ENCODE measurements at regions of chr10 and their contacts with region 1.

Region 1: GRCh38 chr10:63866075-63866746 is 345.0 kb downstream of the REEP3 start:
- DNase-seq: peak; percentile 87
- ATAC-seq: peak; percentile 96
- H3K4me3 Mint-ChIP-seq: peak overlapping the region; percentile 73
- H3K27ac Mint-ChIP-seq: no peak overlapping the region
- H3K4me1 Mint-ChIP-seq: peaks cover 16% of the 10 kb centered on the region
- H3K27me3 Mint-ChIP-seq: no peaks in the 10 kb centered on the region; the same call in 1 of the 2 replicates
- CTCF ChIP-seq: peak; percentile 67

Region 2: GRCh38 chr10:63603709-63604445 is 262.3 kb before region 1 on chr10:
- CTCF ChIA-PET with region 1: no interaction called
- POLR2A ChIA-PET with region 1: no interaction called
- DNase-seq: no peak
- ATAC-seq: no peak
- H3K4me3 Mint-ChIP-seq: no peak overlapping the region
- H3K27ac Mint-ChIP-seq: 0 out of 2 replicates have a peak overlapping the region, but pooled peaks have one; percentile 51
- H3K4me1 Mint-ChIP-seq: peaks cover 11% of the 10 kb centered on the region
- H3K27me3 Mint-ChIP-seq: no peaks in the 10 kb centered on the region
- CTCF ChIP-seq: no peak

Region 3: DNA sequence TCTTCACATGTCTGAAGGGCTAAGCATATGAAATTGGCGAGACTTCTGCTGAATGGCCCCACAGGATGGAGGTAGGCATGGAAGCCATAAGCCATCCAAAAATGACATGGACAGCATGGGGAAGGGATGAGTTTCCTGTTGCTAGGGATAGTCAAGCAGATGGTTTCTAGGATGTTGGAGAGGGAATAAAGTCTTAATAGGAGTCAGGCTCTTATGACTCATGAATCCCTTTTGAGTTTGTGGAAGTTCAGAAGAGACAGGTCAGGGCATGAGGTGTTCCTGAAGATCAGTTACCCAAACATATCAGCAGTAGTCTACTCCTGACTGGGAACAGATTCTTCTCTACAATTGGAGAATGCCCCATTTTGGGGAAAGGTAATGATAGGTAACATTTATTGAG is 101.1 kb before region 1 on chr10:
- CTCF ChIA-PET with region 1: no interaction called
- POLR2A ChIA-PET with region 1: no interaction called
- DNase-seq: no peak
- ATAC-seq: no peak
- H3K4me3 Mint-ChIP-seq: no peak overlapping the region
- H3K27ac Mint-ChIP-seq: no peak overlapping the region
- H3K4me1 Mint-ChIP-seq: peaks cover 12% of the 10 kb centered on the region
- H3K27me3 Mint-ChIP-seq: no peaks in the 10 kb centered on the region
- CTCF ChIP-seq: no peak

Region 4: DNA sequence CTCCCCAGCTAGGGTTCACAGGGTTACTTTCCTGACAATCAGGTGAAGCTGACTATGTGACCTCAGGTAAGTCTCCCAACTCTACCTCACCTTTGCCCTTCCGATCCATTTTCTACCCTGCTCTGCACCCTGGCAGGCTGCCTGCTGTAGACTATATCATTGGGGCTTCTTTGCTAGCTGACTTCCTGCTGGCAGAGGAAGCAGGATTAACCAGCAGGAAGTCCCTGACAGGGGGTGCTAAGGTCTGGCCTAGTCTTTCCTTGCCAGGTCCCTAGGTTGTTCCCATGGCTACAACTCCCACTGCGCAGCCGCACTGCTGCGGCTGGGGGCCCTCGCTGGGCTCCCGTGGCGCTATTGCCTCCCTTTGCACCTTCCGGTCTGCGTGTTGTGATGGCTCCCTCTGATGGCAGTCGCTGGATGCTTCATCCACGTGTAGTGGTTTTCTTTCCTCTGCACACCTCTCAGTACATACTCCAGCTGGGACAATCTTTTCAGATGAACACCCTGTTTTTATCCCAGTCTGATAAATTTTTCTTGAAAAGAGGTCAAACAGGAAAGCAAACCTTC is 20.9 kb after region 1 on chr10:
- CTCF ChIA-PET with region 1: interaction called, 49 read pairs
- POLR2A ChIA-PET with region 1: no interaction called
- DNase-seq: peak; percentile 76
- ATAC-seq: peak; percentile 93
- H3K4me3 Mint-ChIP-seq: no peak overlapping the region
- H3K27ac Mint-ChIP-seq: no peak overlapping the region
- H3K4me1 Mint-ChIP-seq: peaks cover 26% of the 10 kb centered on the region
- H3K27me3 Mint-ChIP-seq: peaks cover 16% of the 10 kb centered on the region
- CTCF ChIP-seq: peak; percentile 46

Region 5: GRCh38 chr10:63910806-63911205 is 44.6 kb after region 1 on chr10:
- CTCF ChIA-PET with region 1: interaction called, 12 read pairs
- POLR2A ChIA-PET with region 1: no interaction called
- DNase-seq: no peak
- ATAC-seq: peak; percentile 74
- H3K4me3 Mint-ChIP-seq: no peak overlapping the region
- H3K27ac Mint-ChIP-seq: no peak overlapping the region
- H3K4me1 Mint-ChIP-seq: peaks cover 18% of the 10 kb centered on the region
- H3K27me3 Mint-ChIP-seq: no peaks in the 10 kb centered on the region
- CTCF ChIP-seq: no peak

Region 6: GRCh38 chr10:64033711-64034110 is 167.5 kb after region 1 on chr10:
- CTCF ChIA-PET with region 1: interaction called, 12 read pairs
- POLR2A ChIA-PET with region 1: no interaction called
- DNase-seq: no peak
- ATAC-seq: no peak
- H3K4me3 Mint-ChIP-seq: no peak overlapping the region
- H3K27ac Mint-ChIP-seq: no peak overlapping the region
- H3K4me1 Mint-ChIP-seq: peaks cover 7% of the 10 kb centered on the region
- H3K27me3 Mint-ChIP-seq: no peaks in the 10 kb centered on the region
- CTCF ChIP-seq: no peak